ENCODE measurements at regions of chr7 and their contacts with region 1.

Region 1: GRCh38 chr7:66844552-66845378 is 76.3 kb upstream of the TMEM248 start:
- DNase-seq: peak; percentile 96
- H3K4me3 ChIP-seq: peak overlapping the region; percentile 62 to 83
- H3K27ac ChIP-seq: peak overlapping the region; percentile 91 to 94
- H3K4me1 ChIP-seq: peaks cover 3% of the 10 kb centered on the region
- H3K27me3 ChIP-seq: no peaks in the 10 kb centered on the region
- CTCF ChIP-seq: peak in 2 of 4 experiments; percentile 35 to 48
- POLR2A ChIP-seq: peak; percentile 90

Region 2: GRCh38 chr7:66654123-66654732 is 190.5 kb before region 1 on chr7:
- intact Hi-C with region 1: loop called (anchors 10 kb)
- DNase-seq: peak; percentile 97
- H3K4me3 ChIP-seq: peak overlapping the region; percentile 88 to 92
- H3K27ac ChIP-seq: peak overlapping the region; percentile 97 to 98
- H3K4me1 ChIP-seq: no peaks in the 10 kb centered on the region
- H3K27me3 ChIP-seq: no peaks in the 10 kb centered on the region
- CTCF ChIP-seq: peak; percentile 11 to 49 (median 41)
- POLR2A ChIP-seq: peak; percentile 99

Region 3: GRCh38 chr7:66681491-66682349 is 163.0 kb before region 1 on chr7:
- intact Hi-C with region 1: loop called (anchors 10 kb)
- DNase-seq: peak; percentile 96
- H3K4me3 ChIP-seq: peak overlapping the region; percentile 83 to 94
- H3K27ac ChIP-seq: peak overlapping the region; percentile 98 to 99
- H3K4me1 ChIP-seq: no peaks in the 10 kb centered on the region
- H3K27me3 ChIP-seq: no peaks in the 10 kb centered on the region
- CTCF ChIP-seq: peak in 1 of 4 experiments; percentile 18
- POLR2A ChIP-seq: peak; percentile 97

Region 4: GRCh38 chr7:66740302-66740979 is 104.3 kb before region 1 on chr7 and contains the start of gene RABGEF1:
- intact Hi-C with region 1: loop called (anchors 10 kb)
- DNase-seq: peak; percentile 97
- H3K4me3 ChIP-seq: peak within 1 kb of the TSS; percentile 71 to 99
- H3K27ac ChIP-seq: peak within 1 kb of the TSS; percentile 93
- H3K4me1 ChIP-seq: no peaks in the 10 kb centered on the region
- H3K27me3 ChIP-seq: no peaks in the 10 kb centered on the region
- CTCF ChIP-seq: no peak
- POLR2A ChIP-seq: peak; percentile 92
- total RNA-seq, gene RABGEF1: 20.8 to 49.6 TPM

Region 5: DNA sequence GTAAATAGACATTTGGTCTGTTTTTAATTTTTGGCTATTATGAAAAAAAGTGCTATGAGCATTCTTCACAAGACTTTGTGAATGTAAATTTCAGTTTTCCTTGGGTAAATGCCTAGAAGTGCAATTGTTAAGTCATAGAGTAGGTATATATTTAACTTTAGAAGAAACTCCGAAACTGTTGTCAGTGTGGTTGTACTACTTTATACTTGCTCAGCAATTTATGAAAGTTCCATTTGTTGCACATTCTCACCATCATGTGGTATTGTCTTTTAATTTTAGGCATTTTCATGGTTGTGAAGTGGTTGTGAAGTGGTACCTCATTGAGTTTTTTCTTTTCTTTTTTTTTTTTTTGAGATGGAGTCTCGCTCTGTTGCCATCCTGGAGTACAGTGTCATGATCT is 211.9 kb after region 1 on chr7:
- intact Hi-C with region 1: no loop called
- DNase-seq: no peak
- H3K4me3 ChIP-seq: no peak overlapping the region
- H3K27ac ChIP-seq: no peak overlapping the region
- H3K4me1 ChIP-seq: no peaks in the 10 kb centered on the region
- H3K27me3 ChIP-seq: no peaks in the 10 kb centered on the region
- CTCF ChIP-seq: no peak
- POLR2A ChIP-seq: no peak

Measured in prostate gland (tissue), 2 donors.